PC-3 (cell line): ENCODE measurements at regions of chr11 and their contacts with region 1.

Region 1: DNA sequence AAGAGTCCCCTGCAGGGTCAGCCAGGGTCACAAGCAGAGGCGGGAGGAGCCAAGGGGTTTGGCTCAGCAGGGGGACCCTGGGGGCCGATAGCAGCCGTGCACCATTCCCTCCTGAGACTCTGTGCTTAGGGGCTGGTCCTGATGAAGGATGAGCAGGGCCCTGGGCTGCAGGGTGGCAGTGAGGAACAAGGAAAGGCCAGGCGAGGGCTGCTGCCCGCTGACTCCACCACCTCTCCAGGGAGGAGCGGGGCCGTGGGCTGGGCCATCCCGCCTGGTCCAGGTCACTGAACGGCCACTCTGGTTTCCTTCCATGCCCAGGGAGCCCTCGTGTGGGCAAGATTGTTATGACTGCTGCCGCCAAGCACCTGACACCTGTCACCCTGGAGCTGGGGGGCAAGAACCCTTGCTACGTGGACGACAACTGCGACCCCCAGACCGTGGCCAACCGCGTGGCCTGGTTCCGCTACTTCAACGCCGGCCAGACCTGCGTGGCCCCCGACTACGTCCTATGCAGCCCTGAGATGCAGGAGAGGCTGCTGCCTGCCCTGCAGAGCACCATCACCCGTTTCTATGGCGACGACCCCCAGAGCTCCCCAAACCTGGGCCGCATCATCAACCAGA is 9.2 kb upstream of the NDUFS8 start:
- DNase-seq: peak; percentile 71
- ATAC-seq: peak; percentile 71
- H3K4me3 ChIP-seq: no peak overlapping the region
- H3K27ac ChIP-seq: peak overlapping the region; percentile 35
- H3K4me1 ChIP-seq: peaks cover 24% of the 10 kb centered on the region
- H3K27me3 ChIP-seq: no peaks in the 10 kb centered on the region
- CTCF ChIP-seq: peak; percentile 70

Region 2: GRCh38 chr11:67674442-67674901 is 346.8 kb before region 1 on chr11 and contains the start of gene ALDH3B2:
- CTCF ChIA-PET with region 1: no interaction called
- POLR2A ChIA-PET with region 1: no interaction called
- intact Hi-C with region 1: no loop called
- DNase-seq: peak; percentile 91
- ATAC-seq: peak; percentile 97
- H3K4me3 ChIP-seq: no peak within 1 kb of the TSS; the same call in 1 of the 2 replicates
- H3K27ac ChIP-seq: peak within 1 kb of the TSS; percentile 31
- H3K4me1 ChIP-seq: peaks cover 20% of the 10 kb centered on the region
- H3K27me3 ChIP-seq: no peaks in the 10 kb centered on the region
- CTCF ChIP-seq: no peak
- total RNA-seq, gene ALDH3B2: 0.40 TPM in 1 of 2 replicates, not detected in the other

Region 3: DNA sequence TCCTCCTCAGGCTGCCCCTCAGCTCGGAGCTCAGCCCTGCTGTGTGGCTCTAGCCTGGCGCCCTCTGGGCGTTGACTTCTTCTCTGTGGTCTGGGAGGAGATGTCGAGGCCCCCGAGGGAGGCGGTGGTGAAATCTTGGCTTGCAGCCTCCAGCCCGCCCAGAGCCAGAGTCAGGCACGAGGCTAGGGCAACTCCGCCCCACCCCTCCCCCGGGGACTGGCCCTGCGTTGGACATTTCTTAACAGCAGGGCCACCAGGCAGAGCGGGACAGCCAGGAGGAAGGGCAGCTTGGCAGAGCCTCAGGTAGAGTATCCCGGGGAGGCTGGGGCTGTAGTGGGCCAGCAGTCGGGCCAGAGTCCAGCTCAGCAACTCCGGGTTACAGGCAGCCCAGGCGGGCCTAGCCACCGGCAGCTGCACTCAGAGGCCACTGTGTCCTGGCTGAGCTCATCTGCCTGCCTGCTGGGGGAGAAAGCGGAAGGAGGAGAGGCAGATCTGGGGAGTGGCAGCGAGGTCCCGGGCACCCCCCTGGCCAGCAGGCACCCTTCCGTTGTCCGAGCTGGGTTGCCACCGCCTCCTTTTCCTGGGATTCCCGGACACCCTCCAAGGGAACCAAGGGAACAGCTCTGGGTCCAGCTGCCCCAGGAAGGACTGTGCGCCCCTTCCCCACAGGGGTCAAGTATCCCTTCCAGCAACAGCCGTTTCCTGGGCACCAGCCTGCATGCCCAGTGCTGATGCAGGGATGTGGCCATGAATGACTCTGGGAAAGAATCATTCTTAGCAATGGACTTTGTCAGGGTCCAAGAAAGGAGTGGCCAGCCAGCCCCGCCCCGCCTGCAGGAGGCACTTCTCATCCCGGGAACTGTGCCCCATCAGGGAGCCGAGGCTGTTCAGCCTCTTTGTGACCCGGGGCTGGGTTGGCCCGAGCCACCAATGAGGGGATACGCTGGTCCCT is 10.9 kb before region 1 on chr11 and contains the start of gene ALDH3B1:
- CTCF ChIA-PET with region 1: interaction called, 5 read pairs
- POLR2A ChIA-PET with region 1: interaction called, 3 read pairs
- intact Hi-C with region 1: loop called (anchors 1 kb)
- DNase-seq: peak; percentile 90
- ATAC-seq: peak; percentile 41
- H3K4me3 ChIP-seq: peak within 1 kb of the TSS; percentile 65
- H3K27ac ChIP-seq: peak within 1 kb of the TSS; percentile 96
- H3K4me1 ChIP-seq: peaks cover 64% of the 10 kb centered on the region
- H3K27me3 ChIP-seq: no peaks in the 10 kb centered on the region
- CTCF ChIP-seq: no peak
- total RNA-seq, gene ALDH3B1: 26.0 and 28.1 TPM in 2 replicates